ENCODE measurements at regions of chr5 and their contacts with region 1.

Region 1: DNA sequence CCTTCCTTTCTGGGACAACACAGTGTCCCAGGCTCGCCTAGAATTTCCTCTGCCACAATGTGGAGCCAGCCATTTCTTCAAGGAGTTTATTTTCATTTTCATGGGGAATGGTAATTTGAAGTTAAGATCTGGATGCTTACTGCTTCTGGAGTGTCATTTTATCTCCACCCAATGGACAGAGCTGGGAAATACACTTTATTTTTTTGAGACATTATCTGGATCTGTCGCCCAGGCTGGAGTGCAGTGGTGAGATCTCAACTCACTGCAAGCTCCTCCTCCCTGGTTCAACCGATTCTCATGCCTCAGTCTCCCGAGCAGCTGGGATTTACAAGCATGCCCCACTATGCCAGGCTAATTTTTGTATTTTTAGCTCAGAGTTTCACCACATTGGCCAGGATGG is 12.7 kb upstream of the THG1L start:
- DNase-seq: peak in 6 of 9 donors; percentile 10 to 48 (median 32)
- ATAC-seq: peak; percentile 82
- H3K4me3 ChIP-seq: no peak overlapping the region
- H3K4me3 Mint-ChIP-seq: peak overlapping the region in 1 of 10 donors; percentile 75
- H3K27ac ChIP-seq: no peak overlapping the region
- H3K27ac Mint-ChIP-seq: peak overlapping the region in 5 of 9 donors; percentile 22 to 76 (median 52)
- H3K4me1 ChIP-seq: no peaks in the 10 kb centered on the region
- H3K4me1 Mint-ChIP-seq: peaks cover 7 to 46% (median 16%) of the 10 kb centered on the region in 7 donors
- H3K27me3 ChIP-seq: no peaks in the 10 kb centered on the region
- H3K27me3 Mint-ChIP-seq: peaks cover 0 to 1% (median 0%) of the 10 kb centered on the region in 5 donors

Region 2: DNA sequence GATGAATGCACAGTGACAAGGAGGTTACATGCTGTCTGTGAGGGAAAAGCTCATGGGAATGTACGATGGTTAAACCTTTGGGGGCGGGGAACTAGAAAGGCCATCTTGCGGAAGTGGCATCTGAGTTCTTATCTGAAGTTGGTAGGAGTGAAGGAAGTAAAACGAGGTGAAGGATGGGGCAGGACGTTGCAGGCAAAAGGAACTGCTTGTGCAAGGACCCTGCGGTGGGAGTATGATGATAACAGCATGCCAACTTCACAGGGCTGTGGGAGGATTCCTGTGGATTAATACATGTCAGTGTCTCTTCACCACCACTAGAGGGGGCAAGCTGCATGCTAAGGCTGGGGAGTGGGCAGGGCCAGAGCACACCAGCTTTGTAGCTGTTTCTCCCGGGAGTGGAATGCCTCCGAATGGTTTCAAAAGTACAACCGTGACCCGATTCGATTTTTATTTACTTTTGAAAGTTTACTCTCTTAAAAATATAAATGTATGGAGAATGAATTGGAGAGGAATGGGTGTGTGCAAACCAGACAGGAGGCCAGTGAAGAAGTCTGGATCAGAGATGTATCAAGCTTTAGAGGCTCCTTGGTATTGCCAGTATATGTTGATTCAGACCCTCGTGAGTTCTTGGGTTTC is 390.1 kb before region 1 on chr5:
- CTCF ChIA-PET with region 1: no interaction called
- POLR2A ChIA-PET with region 1: no interaction called
- intact Hi-C with region 1: loop called (anchors 1 kb)
- DNase-seq: peak in 8 of 9 donors; percentile 42 to 67 (median 60)
- ATAC-seq: peak; percentile 93
- H3K4me3 ChIP-seq: no peak overlapping the region
- H3K4me3 Mint-ChIP-seq: peak overlapping the region; percentile 29 to 80 (median 68)
- H3K27ac ChIP-seq: peak overlapping the region; percentile 63
- H3K27ac Mint-ChIP-seq: peak overlapping the region; percentile 71 to 95 (median 91)
- H3K4me1 ChIP-seq: peaks cover 10 to 24% of the 10 kb centered on the region in 2 donors
- H3K4me1 Mint-ChIP-seq: peaks cover 28 to 50% (median 45%) of the 10 kb centered on the region in 7 donors
- H3K27me3 ChIP-seq: no peaks in the 10 kb centered on the region
- H3K27me3 Mint-ChIP-seq: no peaks in the 10 kb centered on the region

Region 3: GRCh38 chr5:157431544-157432200 is 286.8 kb before region 1 on chr5:
- CTCF ChIA-PET with region 1: interaction called, 9 read pairs
- POLR2A ChIA-PET with region 1: no interaction called
- intact Hi-C with region 1: loop called (anchors 1 kb)
- DNase-seq: peak in 7 of 9 donors; percentile 19 to 60 (median 38)
- ATAC-seq: peak; percentile 91
- H3K4me3 ChIP-seq: no peak overlapping the region
- H3K4me3 Mint-ChIP-seq: peak overlapping the region in 1 of 10 donors; percentile 57
- H3K27ac ChIP-seq: no peak overlapping the region
- H3K27ac Mint-ChIP-seq: no peak overlapping the region
- H3K4me1 ChIP-seq: no peaks in the 10 kb centered on the region
- H3K4me1 Mint-ChIP-seq: peaks cover 0 to 9% (median 7%) of the 10 kb centered on the region in 7 donors
- H3K27me3 ChIP-seq: no peaks in the 10 kb centered on the region
- H3K27me3 Mint-ChIP-seq: peaks cover 0 to 28% (median 0%) of the 10 kb centered on the region in 5 donors

Region 4: DNA sequence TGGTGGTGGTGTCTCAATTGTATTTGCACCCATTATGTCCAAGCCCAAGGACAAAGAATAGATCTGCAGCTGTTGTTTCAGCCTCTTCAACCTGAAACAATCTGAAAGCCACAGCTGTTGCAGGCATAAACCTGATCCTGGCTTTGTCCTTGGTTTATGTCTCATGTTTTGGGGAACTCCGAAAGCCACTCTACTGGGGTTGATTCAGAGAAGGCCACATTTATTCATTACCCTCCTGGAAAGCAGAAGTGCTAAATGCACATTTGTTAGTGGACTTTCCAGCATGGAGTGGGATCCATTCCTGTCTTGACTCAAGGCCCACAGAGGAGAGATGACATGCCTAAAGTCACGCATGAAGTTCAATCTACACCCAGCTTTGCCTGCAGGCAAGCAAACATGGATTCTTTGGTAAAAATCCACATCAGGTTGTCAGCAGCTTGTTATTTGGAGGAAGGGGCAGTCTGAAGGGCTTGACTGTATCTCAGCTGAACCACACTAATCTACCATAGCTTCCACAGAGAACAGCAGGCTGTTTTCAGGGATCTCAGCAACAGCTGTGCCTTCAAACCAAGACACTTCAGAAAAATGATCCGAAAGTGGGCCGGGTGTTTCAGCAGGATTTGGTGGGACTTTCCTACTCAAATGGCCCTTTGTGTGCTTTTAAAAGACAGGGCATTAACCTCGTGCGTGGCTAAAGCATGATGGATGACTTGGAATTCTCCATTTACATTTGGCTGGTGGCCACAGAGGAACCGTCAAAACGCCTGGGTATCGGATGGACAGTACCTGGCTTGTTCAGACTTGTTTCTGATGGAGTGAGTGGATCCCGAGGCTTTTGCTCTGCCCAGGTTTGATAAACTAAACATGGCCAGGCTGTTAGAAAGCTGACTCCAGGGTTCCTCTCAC is 106.7 kb before region 1 on chr5:
- CTCF ChIA-PET with region 1: no interaction called
- POLR2A ChIA-PET with region 1: no interaction called
- intact Hi-C with region 1: loop called in 1 of 2 experiments (anchors 5 kb)
- DNase-seq: no peak
- ATAC-seq: peak; percentile 32
- H3K4me3 ChIP-seq: no peak overlapping the region
- H3K4me3 Mint-ChIP-seq: peak overlapping the region in 1 of 10 donors; percentile 0
- H3K27ac ChIP-seq: no peak overlapping the region
- H3K27ac Mint-ChIP-seq: peak overlapping the region in 1 of 9 donors; percentile 83
- H3K4me1 ChIP-seq: peaks cover 15 to 18% of the 10 kb centered on the region in 2 donors
- H3K4me1 Mint-ChIP-seq: peaks cover 19 to 64% (median 25%) of the 10 kb centered on the region in 7 donors
- H3K27me3 ChIP-seq: no peaks in the 10 kb centered on the region
- H3K27me3 Mint-ChIP-seq: no peaks in the 10 kb centered on the region

Region 5: GRCh38 chr5:157670662-157671591 is 47.6 kb before region 1 on chr5 and contains the start of gene C5orf52:
- CTCF ChIA-PET with region 1: interaction called, 4 read pairs
- POLR2A ChIA-PET with region 1: no interaction called
- intact Hi-C with region 1: loop called (anchors 1 kb)
- DNase-seq: peak in 1 of 9 donors; percentile 52
- ATAC-seq: peak; percentile 41
- H3K4me3 ChIP-seq: peak within 1 kb of the TSS; percentile 38
- H3K4me3 Mint-ChIP-seq: peak within 1 kb of the TSS; percentile 69 to 95 (median 82)
- H3K27ac ChIP-seq: no peak within 1 kb of the TSS
- H3K27ac Mint-ChIP-seq: peak within 1 kb of the TSS in 4 of 9 donors; percentile 4 to 85 (median 22)
- H3K4me1 ChIP-seq: peaks cover 0 to 8% of the 10 kb centered on the region in 2 donors
- H3K4me1 Mint-ChIP-seq: peaks cover 16 to 31% (median 25%) of the 10 kb centered on the region in 7 donors
- H3K27me3 ChIP-seq: peaks cover 0 to 15% of the 10 kb centered on the region in 2 donors
- H3K27me3 Mint-ChIP-seq: peaks cover 25 to 49% (median 44%) of the 10 kb centered on the region in 5 donors
- total RNA-seq, gene C5orf52: not detected

Region 6: DNA sequence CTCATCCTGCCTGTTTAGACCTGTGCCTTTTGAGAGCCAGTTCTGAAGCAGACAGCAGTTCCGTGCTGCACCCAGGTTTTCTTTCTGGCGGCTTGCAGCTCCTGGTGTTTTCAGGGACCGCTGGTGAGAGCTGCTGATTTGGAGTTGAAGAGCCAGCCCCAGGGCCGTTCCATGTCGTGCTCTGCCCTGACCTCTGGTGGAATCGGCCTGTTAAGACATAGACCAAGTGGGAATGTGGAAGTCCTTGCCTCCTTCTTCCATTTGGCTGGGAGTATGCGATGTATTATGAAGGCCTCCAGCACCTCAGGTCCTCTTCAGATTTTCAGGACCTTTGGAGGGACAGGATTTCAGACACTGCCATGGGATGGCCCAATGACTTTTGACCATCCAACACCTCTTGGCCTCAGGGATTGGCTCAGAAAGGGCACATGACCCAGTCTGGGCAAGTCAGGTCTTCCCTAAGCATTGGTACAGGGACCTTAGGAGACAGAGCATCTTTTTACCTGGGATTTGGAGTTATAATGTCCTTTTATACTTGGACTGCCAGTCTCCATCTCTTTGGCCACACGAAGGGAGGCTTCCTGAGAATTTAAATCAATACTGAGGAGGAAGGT is 276.5 kb after region 1 on chr5:
- CTCF ChIA-PET with region 1: no interaction called
- POLR2A ChIA-PET with region 1: no interaction called
- intact Hi-C with region 1: no loop called
- DNase-seq: peak; percentile 5 to 52 (median 31)
- ATAC-seq: peak; percentile 84
- H3K4me3 ChIP-seq: no peak overlapping the region
- H3K4me3 Mint-ChIP-seq: peak overlapping the region in 9 of 10 donors; percentile 29 to 77 (median 61)
- H3K27ac ChIP-seq: no peak overlapping the region
- H3K27ac Mint-ChIP-seq: no peak overlapping the region
- H3K4me1 ChIP-seq: peaks cover 14 to 16% of the 10 kb centered on the region in 2 donors
- H3K4me1 Mint-ChIP-seq: peaks cover 8 to 20% (median 12%) of the 10 kb centered on the region in 7 donors
- H3K27me3 ChIP-seq: peaks cover 0 to 3% of the 10 kb centered on the region in 2 donors
- H3K27me3 Mint-ChIP-seq: peaks cover 13 to 56% (median 20%) of the 10 kb centered on the region in 5 donors